CD4-positive, alpha-beta memory T cell (primary cell): ENCODE measurements at regions of chr12 and their contacts with region 1.

Region 1: GRCh38 chr12:44827832-44828438 is 48.2 kb downstream of the NELL2 start:
- DNase-seq: peak in 4 of 5 donors; percentile 65 to 80 (median 72)
- H3K4me3 ChIP-seq: peak overlapping the region; percentile 5 to 15
- H3K4me3 Mint-ChIP-seq: peak overlapping the region; percentile 64 to 85 (median 80)
- H3K27ac ChIP-seq: peak overlapping the region; percentile 44
- H3K27ac Mint-ChIP-seq: peak overlapping the region; percentile 81 to 96 (median 92)
- H3K4me1 ChIP-seq: peaks cover 55% of the 10 kb centered on the region
- H3K4me1 Mint-ChIP-seq: peaks cover 27 to 61% (median 46%) of the 10 kb centered on the region in 4 donors
- H3K27me3 ChIP-seq: no peaks in the 10 kb centered on the region
- H3K27me3 Mint-ChIP-seq: no peaks in the 10 kb centered on the region

Region 2: GRCh38 chr12:44817687-44818086 is 10.2 kb before region 1 on chr12:
- CTCF ChIA-PET with region 1: interaction called, 11 read pairs
- POLR2A ChIA-PET with region 1: interaction called, 6 read pairs
- intact Hi-C with region 1: loop called (anchors 2 kb)
- DNase-seq: no peak
- H3K4me3 ChIP-seq: no peak overlapping the region
- H3K4me3 Mint-ChIP-seq: peak overlapping the region in 2 of 8 donors; percentile 6 to 8
- H3K27ac ChIP-seq: no peak overlapping the region
- H3K27ac Mint-ChIP-seq: peak overlapping the region in 5 of 7 donors; percentile 2 to 71 (median 28)
- H3K4me1 ChIP-seq: peaks cover 49% of the 10 kb centered on the region
- H3K4me1 Mint-ChIP-seq: peaks cover 15 to 76% (median 56%) of the 10 kb centered on the region in 4 donors
- H3K27me3 ChIP-seq: no peaks in the 10 kb centered on the region
- H3K27me3 Mint-ChIP-seq: no peaks in the 10 kb centered on the region